ENCODE measurements at regions of chr7 and their contacts with region 1.

Region 1: DNA sequence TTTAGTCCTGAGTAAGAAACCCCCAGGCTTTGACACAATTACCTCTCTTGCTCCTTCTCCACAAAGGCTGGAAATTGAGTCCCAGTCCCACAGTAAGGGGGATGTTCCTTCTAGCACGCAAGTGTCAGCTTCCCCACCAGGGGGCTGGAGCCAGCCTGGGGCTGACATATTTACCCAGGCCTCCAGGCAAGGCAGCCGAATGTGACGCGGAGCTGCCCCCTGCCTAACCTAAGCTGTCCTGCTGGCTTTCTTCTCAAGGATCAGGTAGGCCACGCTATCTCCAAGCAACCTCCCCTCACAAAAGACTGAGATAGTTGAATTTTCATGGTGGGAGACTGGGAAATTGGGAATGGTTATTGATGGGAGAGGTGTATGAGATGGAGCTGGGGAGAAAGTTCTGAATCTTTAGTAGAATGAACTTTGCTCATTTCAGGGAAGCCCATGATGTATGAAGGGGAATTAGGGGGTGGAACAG is 19.2 kb upstream of the BMPER start:
- DNase-seq: no peak
- H3K4me3 ChIP-seq: no peak overlapping the region
- H3K27ac ChIP-seq: no peak overlapping the region
- H3K4me1 ChIP-seq: peaks cover 7% of the 10 kb centered on the region
- H3K27me3 ChIP-seq: peaks cover 24% of the 10 kb centered on the region
- CTCF ChIP-seq: no peak

Region 2: GRCh38 chr7:33764752-33765451 is 121.3 kb before region 1 on chr7:
- intact Hi-C with region 1: loop called (anchors 10 kb)
- DNase-seq: no peak
- H3K4me3 ChIP-seq: no peak overlapping the region
- H3K27ac ChIP-seq: no peak overlapping the region
- H3K4me1 ChIP-seq: no peaks in the 10 kb centered on the region
- H3K27me3 ChIP-seq: no peaks in the 10 kb centered on the region
- CTCF ChIP-seq: no peak

Region 3: DNA sequence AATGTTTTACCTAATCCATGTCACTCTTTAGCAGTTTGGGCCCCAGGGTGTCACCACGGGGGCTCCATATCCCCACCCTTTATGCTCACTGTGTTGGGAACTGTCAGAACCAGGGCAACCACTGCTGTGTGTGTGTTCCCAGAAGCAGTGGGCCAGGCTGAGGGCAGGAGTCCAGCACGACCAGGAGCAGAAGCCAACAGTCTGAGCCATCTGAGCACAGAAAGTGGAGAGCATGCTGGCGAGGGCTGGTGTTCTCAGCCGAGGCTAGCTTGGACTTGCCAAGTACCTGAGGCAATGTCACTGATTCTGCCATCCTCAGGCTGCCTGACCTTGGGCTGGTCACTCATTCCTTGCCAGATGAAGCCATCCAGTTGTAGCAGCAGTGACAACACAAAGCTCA is 304.1 kb after region 1 on chr7:
- intact Hi-C with region 1: no loop called
- DNase-seq: peak; percentile 58
- H3K4me3 ChIP-seq: no peak overlapping the region
- H3K27ac ChIP-seq: no peak overlapping the region
- H3K4me1 ChIP-seq: peaks cover 3% of the 10 kb centered on the region
- H3K27me3 ChIP-seq: no peaks in the 10 kb centered on the region
- CTCF ChIP-seq: no peak

Region 4: DNA sequence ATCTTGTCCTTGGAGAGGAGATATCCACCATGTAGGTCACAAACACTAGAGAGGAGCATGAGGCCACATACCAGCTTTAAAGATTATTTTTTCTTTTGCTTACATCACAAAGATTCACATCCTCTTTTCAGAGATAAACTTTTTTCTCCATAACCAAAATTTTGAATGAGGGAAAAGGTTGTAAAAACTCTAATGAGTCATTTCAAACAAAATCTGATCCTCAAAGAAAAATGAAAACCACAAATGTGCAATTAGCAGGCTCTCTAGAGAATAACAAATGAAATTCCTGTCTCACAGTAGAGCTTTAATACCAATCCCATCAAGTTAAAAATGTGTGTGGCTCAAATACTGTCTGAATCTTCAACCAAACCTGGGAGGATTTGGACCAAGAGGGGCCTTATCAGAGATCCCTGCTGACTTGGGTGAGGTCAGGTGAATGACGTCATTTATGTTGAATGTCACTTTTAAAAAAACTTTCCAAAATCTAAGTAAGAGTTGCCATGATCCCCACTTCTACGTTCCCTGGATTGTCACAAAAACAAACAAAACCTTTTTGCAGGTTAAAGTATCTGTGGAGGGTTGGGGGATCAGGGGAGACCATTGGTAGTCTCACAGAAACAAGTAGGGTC is 510.4 kb after region 1 on chr7:
- intact Hi-C with region 1: no loop called
- DNase-seq: no peak
- H3K4me3 ChIP-seq: no peak overlapping the region
- H3K27ac ChIP-seq: no peak overlapping the region
- H3K4me1 ChIP-seq: no peaks in the 10 kb centered on the region
- H3K27me3 ChIP-seq: no peaks in the 10 kb centered on the region
- CTCF ChIP-seq: no peak